Common myeloid progenitor, CD34-positive (primary cell): ENCODE measurements at regions of chr20 and their contacts with region 1.

Region 1: GRCh38 chr20:46520976-46521579 is 7.7 kb upstream of the ZNF334 start:
- DNase-seq: peak; percentile 58 to 81 (median 78)
- H3K4me3 ChIP-seq: no peak overlapping the region
- H3K27ac ChIP-seq: no peak overlapping the region
- H3K4me1 ChIP-seq: no peaks in the 10 kb centered on the region
- H3K27me3 ChIP-seq: peaks cover 0 to 1% (median 0%) of the 10 kb centered on the region in 5 experiments

Region 2: DNA sequence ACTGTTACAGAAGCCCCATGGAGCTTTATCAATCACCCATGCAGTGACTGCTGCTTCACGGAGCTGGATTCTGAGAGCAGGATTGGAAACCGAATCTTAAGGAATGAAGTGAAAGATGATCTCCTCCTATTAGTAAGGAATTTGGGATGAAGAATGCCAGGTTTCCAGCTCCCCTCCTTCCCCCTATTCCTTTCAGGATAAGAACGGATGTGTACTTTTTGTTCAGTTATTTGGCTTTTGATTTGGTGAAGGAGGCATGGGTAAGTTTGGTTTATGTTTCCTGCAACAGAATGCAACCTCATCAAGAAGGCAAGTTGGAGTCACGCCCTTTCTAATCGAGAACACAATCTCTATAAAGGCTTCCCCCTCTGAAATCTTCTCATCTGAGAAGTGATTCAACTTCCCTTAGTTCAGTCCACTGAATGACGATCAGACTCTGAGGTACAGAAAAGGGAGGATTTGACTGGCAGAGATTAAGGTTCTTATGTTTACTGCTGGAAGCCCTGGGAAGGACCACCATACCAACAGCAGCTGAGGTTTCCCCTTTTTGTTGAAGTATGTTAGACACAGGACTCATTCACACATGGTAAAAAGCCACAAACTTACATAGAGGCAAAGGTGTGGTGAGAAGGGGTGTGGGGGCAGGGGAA is 120.1 kb before region 1 on chr20:
- CTCF ChIA-PET with region 1: no interaction called
- POLR2A ChIA-PET with region 1: no interaction called
- DNase-seq: peak; percentile 52 to 84 (median 76)
- H3K4me3 ChIP-seq: peak overlapping the region in 5 of 7 experiments; percentile 8 to 60 (median 48)
- H3K27ac ChIP-seq: peak overlapping the region in 1 of 2 experiments; percentile 37
- H3K4me1 ChIP-seq: peaks cover 46 to 66% (median 56%) of the 10 kb centered on the region in 4 experiments
- H3K27me3 ChIP-seq: no peaks in the 10 kb centered on the region

Region 3: DNA sequence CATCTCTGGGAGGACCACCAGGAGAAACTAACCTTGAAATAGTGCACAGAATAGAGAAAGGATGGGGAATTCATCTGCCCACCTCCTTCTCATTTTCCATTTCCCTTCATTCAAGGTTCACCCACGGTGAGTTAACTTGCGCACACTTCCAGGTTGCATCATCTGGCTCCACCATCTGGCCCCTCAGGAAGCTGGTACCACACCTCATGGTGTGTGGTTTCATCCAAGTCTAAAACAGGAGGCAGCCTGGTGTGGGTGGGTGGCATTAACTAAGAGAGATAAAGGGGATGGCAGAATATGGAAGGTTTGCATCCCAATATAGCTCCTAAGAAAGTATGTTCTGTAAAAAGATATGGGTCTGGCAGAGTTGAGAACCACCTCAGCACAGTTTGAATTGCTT is 11.6 kb before region 1 on chr20:
- CTCF ChIA-PET with region 1: interaction called, 11 read pairs
- POLR2A ChIA-PET with region 1: no interaction called
- DNase-seq: peak; percentile 71 to 96 (median 92)
- H3K4me3 ChIP-seq: peak overlapping the region in 1 of 7 experiments; percentile 26
- H3K27ac ChIP-seq: no peak overlapping the region
- H3K4me1 ChIP-seq: peaks cover 7 to 23% (median 17%) of the 10 kb centered on the region in 4 experiments
- H3K27me3 ChIP-seq: no peaks in the 10 kb centered on the region

Region 4: DNA sequence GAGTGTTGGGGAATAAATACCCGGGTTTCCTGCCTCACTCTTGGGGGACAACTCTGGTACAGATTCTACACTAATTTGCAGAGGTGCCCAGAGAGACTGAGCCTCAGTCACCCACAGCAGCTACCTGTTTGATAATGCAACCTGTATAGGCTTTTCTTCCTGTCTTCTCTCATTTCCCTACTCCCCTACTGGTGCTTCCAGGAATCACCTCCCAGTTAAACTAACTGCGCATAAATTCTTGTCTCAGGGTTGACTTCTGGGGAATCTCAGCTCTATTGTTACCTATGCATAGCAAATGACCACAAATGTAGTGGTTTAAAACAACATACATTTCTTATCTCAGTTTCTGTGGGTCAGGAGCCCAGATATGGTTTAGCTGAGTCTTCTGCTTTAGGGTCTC is 18.0 kb after region 1 on chr20:
- CTCF ChIA-PET with region 1: interaction called, 10 read pairs
- POLR2A ChIA-PET with region 1: no interaction called
- DNase-seq: no peak
- H3K4me3 ChIP-seq: no peak overlapping the region
- H3K27ac ChIP-seq: no peak overlapping the region
- H3K4me1 ChIP-seq: no peaks in the 10 kb centered on the region
- H3K27me3 ChIP-seq: peaks cover 0 to 10% (median 2%) of the 10 kb centered on the region in 5 experiments